ENCODE measurements at regions of chr19 and their contacts with region 1.

Region 1: DNA sequence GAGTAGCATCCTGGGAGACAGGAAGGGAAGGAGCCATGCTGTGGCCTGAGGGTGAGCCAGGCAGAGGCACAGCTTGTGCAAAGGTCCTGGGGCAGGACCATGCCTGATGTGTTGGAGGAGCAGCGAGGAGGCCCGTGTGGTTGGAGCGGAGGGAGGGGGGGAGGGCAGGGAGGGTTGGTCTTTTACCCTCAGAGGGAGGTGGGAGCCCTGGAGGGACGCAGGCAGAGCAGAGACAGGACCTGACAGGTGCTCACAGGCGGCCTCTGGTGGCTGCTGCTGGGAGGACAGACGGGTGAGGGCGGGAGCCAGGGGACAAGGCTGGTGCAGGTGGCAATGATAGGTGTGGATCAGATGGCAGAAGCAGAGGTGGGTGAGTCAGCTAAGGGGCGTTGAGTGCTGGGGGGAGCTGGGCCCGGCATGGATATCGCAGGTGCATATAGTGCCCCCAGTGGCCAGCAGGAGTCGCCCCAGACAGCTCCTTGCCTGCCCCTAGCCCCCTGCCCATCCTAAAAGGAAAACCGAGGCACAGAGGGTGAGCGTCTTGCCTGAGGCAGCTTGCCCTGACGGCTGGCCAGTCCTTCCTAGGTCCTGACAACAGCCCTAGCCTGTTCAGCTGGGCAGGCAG is 9.8 kb upstream of the GNA15 start:
- DNase-seq: peak; percentile 87
- H3K4me3 ChIP-seq: peak overlapping the region in 1 of 2 experiments; percentile 6; a peak in 1 of 4 replicates
- H3K27ac ChIP-seq: no peak overlapping the region
- H3K4me1 ChIP-seq: no peaks in the 10 kb centered on the region
- H3K27me3 ChIP-seq: no peaks in the 10 kb centered on the region
- CTCF ChIP-seq: peak; percentile 84
- EP300 ChIP-seq: no peak
- RAD21 ChIP-seq: peak; percentile 47

Region 2: DNA sequence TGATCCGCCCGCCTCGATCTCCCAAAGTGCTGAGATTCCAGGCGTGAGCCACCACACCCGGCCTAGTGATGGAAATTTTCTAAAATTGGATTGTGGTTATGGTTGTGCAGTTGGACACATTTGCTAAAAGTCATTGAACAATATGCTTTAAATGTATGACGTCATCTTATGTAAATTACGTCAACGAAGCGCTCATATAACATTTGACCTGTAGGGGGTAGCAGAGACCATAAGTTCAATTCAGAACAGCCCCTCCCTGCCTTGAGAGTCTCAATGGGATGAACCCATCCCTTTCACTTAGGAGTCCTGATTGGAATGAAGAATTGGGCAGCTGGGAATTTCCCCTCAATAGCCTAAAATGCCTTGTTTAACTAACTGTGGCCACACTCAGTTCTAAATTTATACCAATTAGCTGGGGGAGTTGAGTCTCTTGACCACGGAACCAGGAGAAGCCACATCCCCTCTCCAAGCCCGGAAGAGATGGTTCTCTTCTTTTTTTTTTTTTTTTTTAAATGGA is 163.9 kb before region 1 on chr19:
- CTCF ChIA-PET with region 1: interaction called, 48 read pairs
- POLR2A ChIA-PET with region 1: interaction called, 4 read pairs
- DNase-seq: peak; percentile 77
- H3K4me3 ChIP-seq: peak overlapping the region in 1 of 2 experiments; percentile 37; a peak in 1 of 4 replicates
- H3K27ac ChIP-seq: no peak overlapping the region
- H3K4me1 ChIP-seq: no peaks in the 10 kb centered on the region
- H3K27me3 ChIP-seq: 0 out of 2 replicates have a peak, but pooled peaks cover 3% of the 10 kb centered on the region
- CTCF ChIP-seq: peak; percentile 83
- EP300 ChIP-seq: no peak; a peak in 1 of 4 replicates
- RAD21 ChIP-seq: peak; percentile 94

Region 3: DNA sequence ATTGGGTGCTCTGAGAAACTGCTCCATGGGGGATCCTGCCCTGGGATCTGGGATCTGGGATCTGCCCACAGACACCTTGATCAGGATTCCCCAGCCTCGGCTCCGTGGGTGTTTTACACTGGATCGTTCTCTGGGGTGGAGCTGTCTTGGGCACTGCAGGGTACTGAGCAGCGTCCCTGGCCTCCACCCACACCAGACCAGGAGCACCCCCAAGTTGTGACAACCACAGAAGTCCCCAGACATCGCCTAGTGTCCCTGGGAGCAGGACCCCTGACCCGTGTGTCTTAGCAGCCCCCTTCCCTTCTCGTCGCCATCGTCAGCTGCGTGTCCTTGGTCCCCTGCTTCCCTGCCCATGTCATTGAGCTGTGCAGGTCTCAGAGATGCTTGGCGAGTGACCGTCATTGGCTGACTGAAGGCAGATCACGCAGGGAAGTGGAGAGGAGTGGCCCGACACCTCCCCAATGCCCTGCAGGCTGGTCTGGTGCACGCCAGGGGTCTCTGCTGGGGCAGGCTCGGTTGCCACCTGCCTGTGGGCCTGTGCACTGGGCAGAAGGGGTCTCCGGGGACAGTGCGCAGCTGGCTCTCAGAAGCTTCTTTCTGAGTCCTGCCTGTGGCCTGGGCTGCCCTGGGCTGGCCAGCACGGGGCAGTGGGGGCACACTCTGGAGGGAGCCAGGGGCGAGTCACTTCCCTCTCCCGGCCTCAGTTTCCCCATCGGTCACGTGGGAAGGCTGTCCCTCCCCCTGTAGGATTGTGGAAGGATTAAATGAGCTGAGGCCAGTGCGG is 25.7 kb before region 1 on chr19:
- CTCF ChIA-PET with region 1: interaction called, 11 read pairs
- POLR2A ChIA-PET with region 1: no interaction called
- DNase-seq: no peak
- H3K4me3 ChIP-seq: no peak overlapping the region
- H3K27ac ChIP-seq: no peak overlapping the region
- H3K4me1 ChIP-seq: peaks cover 0 to 23% of the 10 kb centered on the region in 2 experiments; a peak in 1 of 4 replicates
- H3K27me3 ChIP-seq: no peaks in the 10 kb centered on the region
- CTCF ChIP-seq: no peak
- EP300 ChIP-seq: no peak
- RAD21 ChIP-seq: no peak

Region 4: GRCh38 chr19:3108775-3109174 is 17.2 kb before region 1 on chr19:
- CTCF ChIA-PET with region 1: interaction called, 43 read pairs
- POLR2A ChIA-PET with region 1: no interaction called
- DNase-seq: peak; percentile 84
- H3K4me3 ChIP-seq: no peak overlapping the region
- H3K27ac ChIP-seq: no peak overlapping the region
- H3K4me1 ChIP-seq: no peaks in the 10 kb centered on the region
- H3K27me3 ChIP-seq: no peaks in the 10 kb centered on the region
- CTCF ChIP-seq: peak; percentile 85
- EP300 ChIP-seq: no peak
- RAD21 ChIP-seq: peak; percentile 63

Region 5: GRCh38 chr19:3146677-3147100 is 20.7 kb after region 1 on chr19:
- CTCF ChIA-PET with region 1: interaction called, 31 read pairs
- POLR2A ChIA-PET with region 1: interaction called, 4 read pairs
- DNase-seq: peak; percentile 79
- H3K4me3 ChIP-seq: peak overlapping the region in 1 of 2 experiments; percentile 23; a peak in 1 of 4 replicates
- H3K27ac ChIP-seq: no peak overlapping the region
- H3K4me1 ChIP-seq: peaks cover 0 to 13% of the 10 kb centered on the region in 2 experiments; a peak in 1 of 4 replicates
- H3K27me3 ChIP-seq: no peaks in the 10 kb centered on the region
- CTCF ChIP-seq: peak; percentile 93
- EP300 ChIP-seq: no peak
- RAD21 ChIP-seq: peak; percentile 22; the same call in 1 of the 2 replicates

Region 6: GRCh38 chr19:3151563-3152430 is 25.8 kb after region 1 on chr19:
- CTCF ChIA-PET with region 1: interaction called, 31 read pairs
- POLR2A ChIA-PET with region 1: no interaction called
- DNase-seq: no peak
- H3K4me3 ChIP-seq: no peak overlapping the region
- H3K27ac ChIP-seq: no peak overlapping the region
- H3K4me1 ChIP-seq: peaks cover 0 to 3% of the 10 kb centered on the region in 2 experiments; a peak in 2 of 4 replicates
- H3K27me3 ChIP-seq: no peaks in the 10 kb centered on the region
- CTCF ChIP-seq: no peak
- EP300 ChIP-seq: no peak
- RAD21 ChIP-seq: no peak

Region 7: DNA sequence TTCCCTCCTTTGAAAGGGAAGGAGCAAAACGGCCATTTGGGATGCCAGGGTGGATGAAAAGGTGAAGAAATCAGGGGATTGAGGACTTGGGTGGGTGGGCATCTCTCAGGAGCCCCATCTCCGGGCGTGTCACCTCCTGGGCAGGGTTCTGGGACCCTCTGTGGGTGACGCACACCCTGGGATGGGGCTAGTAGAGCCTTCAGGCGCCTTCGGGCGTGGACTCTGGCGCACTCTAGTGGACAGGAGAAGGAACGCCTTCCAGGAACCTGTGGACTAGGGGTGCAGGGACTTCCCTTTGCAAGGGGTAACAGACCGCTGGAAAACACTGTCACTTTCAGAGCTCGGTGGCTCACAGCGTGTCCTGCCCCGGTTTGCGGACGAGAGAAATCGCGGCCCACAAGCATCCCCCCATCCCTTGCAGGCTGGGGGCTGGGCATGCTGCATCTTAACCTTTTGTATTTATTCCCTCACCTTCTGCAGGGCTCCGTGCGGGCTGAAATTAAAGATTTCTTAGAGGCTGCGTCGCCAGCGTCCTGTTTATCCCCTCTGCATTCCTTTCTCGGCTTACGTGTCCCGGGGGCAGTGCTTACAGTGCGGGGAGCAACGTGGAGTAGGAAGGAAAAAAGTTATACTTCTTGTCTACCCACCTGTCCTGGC is 37.3 kb after region 1 on chr19:
- CTCF ChIA-PET with region 1: interaction called, 58 read pairs
- POLR2A ChIA-PET with region 1: no interaction called
- DNase-seq: peak; percentile 93
- H3K4me3 ChIP-seq: peak overlapping the region in 1 of 2 experiments; percentile 19; a peak in 2 of 4 replicates
- H3K27ac ChIP-seq: no peak overlapping the region
- H3K4me1 ChIP-seq: no peaks in the 10 kb centered on the region; a peak in 1 of 4 replicates
- H3K27me3 ChIP-seq: no peaks in the 10 kb centered on the region
- CTCF ChIP-seq: peak; percentile 92
- EP300 ChIP-seq: no peak
- RAD21 ChIP-seq: peak; percentile 91

Region 8: GRCh38 chr19:3176603-3177501 is 50.8 kb after region 1 on chr19:
- CTCF ChIA-PET with region 1: no interaction called
- POLR2A ChIA-PET with region 1: no interaction called
- DNase-seq: no peak
- H3K4me3 ChIP-seq: no peak overlapping the region
- H3K27ac ChIP-seq: no peak overlapping the region
- H3K4me1 ChIP-seq: no peaks in the 10 kb centered on the region; a peak in 1 of 4 replicates
- H3K27me3 ChIP-seq: no peaks in the 10 kb centered on the region
- CTCF ChIP-seq: no peak
- EP300 ChIP-seq: no peak
- RAD21 ChIP-seq: no peak

Measured in SK-N-SH (cell line).